CD8-positive, alpha-beta T cell (primary cell): ENCODE measurements at regions of chr7 and their contacts with region 1.

Region 1: GRCh38 chr7:87219545-87220025 is at the start of gene TMEM243:
- DNase-seq: peak; percentile 67 to 93 (median 86)
- ATAC-seq: peak; percentile 69
- H3K4me3 ChIP-seq: peak within 1 kb of the TSS; percentile 86 to 94
- H3K4me3 Mint-ChIP-seq: peak within 1 kb of the TSS; percentile 99
- H3K27ac ChIP-seq: peak within 1 kb of the TSS; percentile 90 to 94
- H3K27ac Mint-ChIP-seq: peak within 1 kb of the TSS; percentile 99
- H3K4me1 ChIP-seq: peaks cover 36% of the 10 kb centered on the region
- H3K4me1 Mint-ChIP-seq: peaks cover 38% of the 10 kb centered on the region
- H3K27me3 ChIP-seq: no peaks in the 10 kb centered on the region
- H3K27me3 Mint-ChIP-seq: no peaks in the 10 kb centered on the region
- CTCF ChIP-seq: peak; percentile 39
- total RNA-seq, gene TMEM243: 122 to 124 TPM

Region 2: GRCh38 chr7:87059525-87060287 is 159.9 kb before region 1 on chr7 and contains the start of gene ELAPOR2:
- CTCF ChIA-PET with region 1: interaction called, 3 read pairs
- POLR2A ChIA-PET with region 1: interaction called, 3 read pairs
- intact Hi-C with region 1: loop called (anchors 1 to 5 kb)
- DNase-seq: peak; percentile 64 to 89 (median 80)
- ATAC-seq: peak; percentile 94
- H3K4me3 ChIP-seq: peak within 1 kb of the TSS; percentile 43 to 62
- H3K4me3 Mint-ChIP-seq: peak within 1 kb of the TSS; percentile 87
- H3K27ac ChIP-seq: peak within 1 kb of the TSS; percentile 16 to 38
- H3K27ac Mint-ChIP-seq: peak within 1 kb of the TSS; percentile 77
- H3K4me1 ChIP-seq: peaks cover 10% of the 10 kb centered on the region
- H3K4me1 Mint-ChIP-seq: peaks cover 16% of the 10 kb centered on the region
- H3K27me3 ChIP-seq: no peaks in the 10 kb centered on the region
- H3K27me3 Mint-ChIP-seq: peaks cover 5% of the 10 kb centered on the region
- CTCF ChIP-seq: no peak
- total RNA-seq, gene ELAPOR2: 5.1 to 5.7 TPM

Region 3: DNA sequence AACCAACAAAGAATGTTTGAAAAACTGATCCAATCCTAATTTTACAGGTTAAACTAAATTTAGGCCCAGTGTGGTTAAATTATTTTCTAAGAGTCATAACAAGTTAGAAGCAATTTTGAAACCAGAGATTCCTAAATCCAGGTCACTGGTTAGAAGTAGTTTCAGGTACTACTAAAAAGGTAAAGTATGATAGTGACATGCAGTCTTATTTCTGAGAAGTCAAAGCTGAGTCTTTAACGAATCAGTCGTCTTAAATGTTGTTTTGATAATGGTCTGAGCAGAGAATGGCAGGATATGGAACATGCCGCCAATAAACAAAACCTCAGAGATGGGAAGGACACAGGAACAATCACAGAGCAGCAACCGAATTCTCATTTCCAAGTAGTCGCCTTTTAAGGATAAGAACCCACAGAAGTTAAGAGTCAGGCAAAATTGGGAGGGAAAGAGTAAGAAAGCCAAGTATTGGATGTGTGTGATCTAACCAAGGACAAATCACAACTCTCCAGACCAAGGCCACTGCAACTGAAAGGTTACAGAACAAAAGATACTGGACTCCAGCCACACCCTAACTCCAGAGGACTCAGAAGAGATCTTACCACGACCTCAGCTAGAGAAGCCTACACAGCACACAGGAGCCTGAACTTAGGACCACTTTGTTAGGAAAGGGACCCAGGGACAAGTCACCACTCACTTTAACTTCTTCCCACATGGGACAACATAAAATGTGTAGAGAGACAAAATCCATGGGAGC is 19.7 kb before region 1 on chr7:
- CTCF ChIA-PET with region 1: interaction called, 5 read pairs
- POLR2A ChIA-PET with region 1: interaction called, 14 read pairs
- intact Hi-C with region 1: loop called in 1 of 2 experiments (anchors 1 kb)
- DNase-seq: no peak
- ATAC-seq: no peak
- H3K4me3 ChIP-seq: no peak overlapping the region
- H3K4me3 Mint-ChIP-seq: no peak overlapping the region
- H3K27ac ChIP-seq: peak overlapping the region in 1 of 2 experiments; percentile 17
- H3K27ac Mint-ChIP-seq: peak overlapping the region; percentile 81
- H3K4me1 ChIP-seq: peaks cover 34% of the 10 kb centered on the region
- H3K4me1 Mint-ChIP-seq: peaks cover 74% of the 10 kb centered on the region
- H3K27me3 ChIP-seq: no peaks in the 10 kb centered on the region
- H3K27me3 Mint-ChIP-seq: no peaks in the 10 kb centered on the region
- CTCF ChIP-seq: no peak

Region 4: DNA sequence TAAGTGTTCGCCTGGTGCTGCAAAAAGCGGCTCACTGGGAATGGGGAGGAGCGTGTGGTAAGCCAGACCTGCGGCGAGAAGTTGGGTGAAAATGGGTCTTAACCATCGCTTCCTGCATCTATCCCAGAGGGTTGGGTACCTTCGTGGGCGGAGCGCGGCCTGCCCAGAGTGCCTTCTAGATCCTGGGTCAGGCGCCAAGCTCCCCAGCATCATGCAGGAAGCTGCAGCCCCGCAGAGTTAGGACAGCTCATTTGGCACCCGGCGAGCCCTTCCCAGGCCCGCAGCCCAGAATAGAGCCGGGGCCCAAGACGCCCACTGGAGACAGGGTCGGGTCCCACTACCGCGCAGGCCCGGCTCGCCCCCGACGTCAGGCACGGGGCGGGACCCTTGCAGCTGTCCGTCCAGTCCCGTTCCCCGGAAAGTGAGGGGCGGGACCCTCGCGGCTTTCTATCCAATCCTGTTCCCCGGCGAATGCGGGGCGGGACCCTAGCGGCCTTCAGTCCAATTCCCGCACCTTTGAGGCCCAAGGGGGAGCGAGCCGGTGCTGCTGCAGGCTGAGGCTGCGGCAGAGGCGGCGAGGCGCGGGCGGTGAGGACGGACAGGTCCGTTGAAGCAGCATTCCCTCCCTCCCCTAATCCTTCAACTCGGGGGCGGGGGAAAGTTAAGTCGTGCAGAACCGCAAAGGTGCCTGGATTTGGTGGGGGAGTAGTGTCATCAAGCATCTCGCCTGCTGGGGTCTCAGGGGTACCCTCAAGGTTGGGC is 125.8 kb after region 1 on chr7 and contains the start of gene CROT:
- CTCF ChIA-PET with region 1: no interaction called
- POLR2A ChIA-PET with region 1: interaction called, 6 read pairs
- intact Hi-C with region 1: loop called (anchors 2 kb)
- DNase-seq: peak; percentile 84 to 96 (median 94)
- ATAC-seq: peak; percentile 96
- H3K4me3 ChIP-seq: peak within 1 kb of the TSS; percentile 91 to 96
- H3K4me3 Mint-ChIP-seq: peak within 1 kb of the TSS; percentile 95
- H3K27ac ChIP-seq: peak within 1 kb of the TSS; percentile 87 to 89
- H3K27ac Mint-ChIP-seq: peak within 1 kb of the TSS; percentile 96
- H3K4me1 ChIP-seq: peaks cover 25% of the 10 kb centered on the region
- H3K4me1 Mint-ChIP-seq: peaks cover 50% of the 10 kb centered on the region
- H3K27me3 ChIP-seq: no peaks in the 10 kb centered on the region
- H3K27me3 Mint-ChIP-seq: no peaks in the 10 kb centered on the region
- CTCF ChIP-seq: no peak
- total RNA-seq, gene CROT: 5.3 to 7.2 TPM

Region 5: DNA sequence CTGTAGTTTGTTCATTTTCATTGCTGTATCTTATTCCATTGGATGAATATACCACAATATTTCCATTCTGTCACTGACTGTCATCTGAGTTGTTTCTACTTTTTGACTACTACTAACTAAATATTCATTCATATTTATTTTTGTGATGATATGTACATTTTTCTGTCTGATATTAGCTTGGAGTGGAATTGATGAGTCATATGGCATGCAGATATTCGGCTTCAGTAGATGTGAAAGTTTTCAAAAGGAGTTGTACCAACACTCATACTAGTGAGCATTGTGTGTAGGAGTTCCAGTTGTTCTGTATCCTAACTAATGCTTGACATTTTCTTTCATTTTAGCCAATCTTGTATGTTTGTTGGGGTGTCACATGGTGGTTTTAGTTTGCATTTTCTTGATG is 416.3 kb after region 1 on chr7:
- CTCF ChIA-PET with region 1: no interaction called
- POLR2A ChIA-PET with region 1: no interaction called
- intact Hi-C with region 1: loop called in 1 of 2 experiments (anchors 10 kb)
- DNase-seq: no peak
- ATAC-seq: no peak
- H3K4me3 ChIP-seq: no peak overlapping the region
- H3K4me3 Mint-ChIP-seq: no peak overlapping the region
- H3K27ac ChIP-seq: no peak overlapping the region
- H3K27ac Mint-ChIP-seq: no peak overlapping the region
- H3K4me1 ChIP-seq: no peaks in the 10 kb centered on the region
- H3K4me1 Mint-ChIP-seq: no peaks in the 10 kb centered on the region
- H3K27me3 ChIP-seq: no peaks in the 10 kb centered on the region
- H3K27me3 Mint-ChIP-seq: no peaks in the 10 kb centered on the region
- CTCF ChIP-seq: no peak

Region 6: GRCh38 chr7:88219781-88220747 is 1000.5 kb after region 1 on chr7 and contains the start of gene SRI:
- CTCF ChIA-PET with region 1: no interaction called
- POLR2A ChIA-PET with region 1: no interaction called
- intact Hi-C with region 1: loop called in 1 of 2 experiments (anchors 5 kb)
- DNase-seq: peak; percentile 87 to 95 (median 92)
- ATAC-seq: peak; percentile 97
- H3K4me3 ChIP-seq: peak within 1 kb of the TSS; percentile 81 to 86
- H3K4me3 Mint-ChIP-seq: peak within 1 kb of the TSS; percentile 95
- H3K27ac ChIP-seq: peak within 1 kb of the TSS; percentile 73 to 83
- H3K27ac Mint-ChIP-seq: peak within 1 kb of the TSS; percentile 97
- H3K4me1 ChIP-seq: peaks cover 21% of the 10 kb centered on the region
- H3K4me1 Mint-ChIP-seq: peaks cover 34% of the 10 kb centered on the region
- H3K27me3 ChIP-seq: no peaks in the 10 kb centered on the region
- H3K27me3 Mint-ChIP-seq: no peaks in the 10 kb centered on the region
- CTCF ChIP-seq: peak; percentile 97
- total RNA-seq, gene SRI: 38.5 to 43.9 TPM